IMR-90 (cell line): ENCODE measurements at regions of chr1 and their contacts with region 1.

Region 1: DNA sequence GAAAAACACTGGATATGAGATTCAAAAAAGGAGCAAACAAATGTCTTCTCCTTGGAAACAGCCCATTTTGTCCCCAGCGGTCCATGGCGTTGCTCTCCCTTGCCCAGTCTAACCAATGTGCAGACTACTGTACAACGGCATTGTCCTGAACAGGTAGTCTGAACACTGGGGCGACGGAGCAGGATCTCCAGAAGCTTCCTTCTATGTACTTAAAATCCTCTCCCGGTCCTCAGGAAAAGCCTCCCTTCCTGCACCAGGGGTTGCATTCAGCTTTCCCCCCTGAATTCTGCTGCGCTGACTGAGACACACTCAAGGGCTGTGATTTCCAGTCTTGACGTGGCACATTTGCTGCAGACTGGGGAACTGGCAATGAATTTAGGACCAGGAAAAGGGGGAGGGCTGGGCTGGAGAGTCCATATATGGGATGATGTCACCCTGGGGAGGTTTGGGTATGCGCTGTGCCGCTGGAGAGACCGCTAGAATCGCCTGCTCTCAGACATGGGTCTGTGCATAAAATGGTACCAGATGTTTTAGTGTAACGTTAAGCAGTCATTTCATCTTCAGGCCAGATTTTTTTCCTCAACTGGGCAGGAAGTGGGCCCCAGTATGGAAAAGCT is 275.9 kb upstream of the C1orf105 start:
- DNase-seq: peak; percentile 98
- ATAC-seq: peak; percentile 90
- H3K4me3 ChIP-seq: peak overlapping the region; percentile 65
- H3K27ac ChIP-seq: peak overlapping the region; percentile 86
- H3K4me1 ChIP-seq: peaks cover 5% of the 10 kb centered on the region; the same call in 1 of the 2 replicates
- H3K27me3 ChIP-seq: no peaks in the 10 kb centered on the region
- CTCF ChIP-seq: no peak
- POLR2A ChIP-seq: peak; percentile 87
- RAD21 ChIP-seq: peak; percentile 18; the same call in 1 of the 2 replicates

Region 2: DNA sequence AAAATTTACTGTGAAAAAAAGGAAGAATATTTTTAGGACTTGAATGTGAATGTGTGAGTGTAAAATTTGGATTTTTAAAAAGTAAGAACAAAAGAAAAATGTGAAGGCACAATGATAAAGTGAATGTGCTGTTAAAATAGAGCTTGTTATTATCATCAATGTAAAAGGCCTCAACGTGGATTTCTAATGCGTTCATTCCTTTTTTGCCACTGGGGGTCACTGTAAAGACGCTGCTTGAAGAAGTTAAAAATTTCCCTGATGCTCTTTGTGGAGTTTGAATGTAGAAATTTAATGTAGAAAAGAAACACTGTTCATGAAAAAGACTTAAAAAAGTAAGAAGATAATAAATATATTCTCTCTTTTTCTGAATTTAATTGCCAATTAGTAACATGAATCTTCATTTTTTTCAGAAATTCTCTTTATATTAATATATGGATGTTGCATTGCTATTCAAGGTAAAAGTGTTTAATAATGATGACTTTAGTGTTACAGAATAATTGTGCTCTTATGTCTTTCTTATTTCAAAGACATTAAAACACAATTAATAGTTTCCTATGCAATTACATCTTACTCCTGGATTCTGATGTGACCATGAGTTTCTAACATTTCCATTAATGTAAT is 141.7 kb before region 1 on chr1:
- CTCF ChIA-PET with region 1: no interaction called
- POLR2A ChIA-PET with region 1: interaction called, 7 read pairs
- dilution Hi-C with region 1: no loop called
- in situ Hi-C with region 1: no loop called
- intact Hi-C with region 1: loop called (anchors 2 kb)
- DNase-seq: peak; percentile 73
- ATAC-seq: peak; percentile 69
- H3K4me3 ChIP-seq: no peak overlapping the region
- H3K27ac ChIP-seq: no peak overlapping the region
- H3K4me1 ChIP-seq: peaks cover 3% of the 10 kb centered on the region; the same call in 1 of the 2 replicates
- H3K27me3 ChIP-seq: no peaks in the 10 kb centered on the region
- CTCF ChIP-seq: peak; percentile 92
- POLR2A ChIP-seq: no peak
- RAD21 ChIP-seq: peak; percentile 94

Region 3: DNA sequence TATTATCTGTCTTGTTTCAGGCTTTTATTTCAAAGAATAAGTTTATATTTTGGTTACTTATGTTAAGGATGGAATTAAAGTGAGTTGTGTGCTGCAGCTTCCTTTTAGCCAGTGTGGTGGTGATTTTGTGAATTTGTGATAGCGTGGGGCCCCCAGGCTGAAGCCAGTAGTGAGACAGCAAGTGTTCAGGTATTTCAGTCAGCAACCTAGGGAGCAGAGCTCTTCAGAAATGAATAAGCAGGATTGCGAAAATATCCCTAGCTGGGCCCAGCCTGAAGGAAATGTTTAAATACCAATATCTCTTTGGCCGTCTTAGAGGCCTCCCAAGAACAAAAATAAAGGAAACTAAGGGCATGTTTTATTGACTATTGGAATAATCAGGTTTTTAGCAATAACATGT is 125.1 kb after region 1 on chr1:
- CTCF ChIA-PET with region 1: no interaction called
- POLR2A ChIA-PET with region 1: no interaction called
- dilution Hi-C with region 1: no loop called
- in situ Hi-C with region 1: no loop called
- intact Hi-C with region 1: loop called (anchors 1 kb)
- DNase-seq: peak; percentile 66
- ATAC-seq: peak; percentile 74
- H3K4me3 ChIP-seq: no peak overlapping the region
- H3K27ac ChIP-seq: no peak overlapping the region
- H3K4me1 ChIP-seq: peaks cover 2% of the 10 kb centered on the region; the same call in 1 of the 2 replicates
- H3K27me3 ChIP-seq: no peaks in the 10 kb centered on the region
- CTCF ChIP-seq: no peak
- POLR2A ChIP-seq: no peak
- RAD21 ChIP-seq: no peak

Region 4: GRCh38 chr1:172343240-172344160 is 198.9 kb after region 1 on chr1:
- CTCF ChIA-PET with region 1: interaction called, 3 read pairs
- POLR2A ChIA-PET with region 1: no interaction called
- dilution Hi-C with region 1: no loop called
- in situ Hi-C with region 1: no loop called
- intact Hi-C with region 1: loop called (anchors 1 kb)
- DNase-seq: peak; percentile 91
- ATAC-seq: peak; percentile 88
- H3K4me3 ChIP-seq: peak overlapping the region; percentile 31; the same call in 1 of the 2 replicates
- H3K27ac ChIP-seq: peak overlapping the region; percentile 56; the same call in 1 of the 2 replicates
- H3K4me1 ChIP-seq: peaks cover 9% of the 10 kb centered on the region
- H3K27me3 ChIP-seq: no peaks in the 10 kb centered on the region
- CTCF ChIP-seq: no peak
- POLR2A ChIP-seq: peak; percentile 37; the same call in 1 of the 2 replicates
- RAD21 ChIP-seq: no peak

Region 5: GRCh38 chr1:172398970-172399755 is 254.6 kb after region 1 on chr1:
- CTCF ChIA-PET with region 1: interaction called, 3 read pairs
- POLR2A ChIA-PET with region 1: interaction called, 12 read pairs
- dilution Hi-C with region 1: no loop called
- in situ Hi-C with region 1: loop called (anchors 10 kb)
- intact Hi-C with region 1: loop called (anchors 1 kb)
- DNase-seq: peak; percentile 92
- ATAC-seq: peak; percentile 88
- H3K4me3 ChIP-seq: no peak overlapping the region
- H3K27ac ChIP-seq: peak overlapping the region; percentile 59; the same call in 1 of the 2 replicates
- H3K4me1 ChIP-seq: peaks cover 3% of the 10 kb centered on the region
- H3K27me3 ChIP-seq: no peaks in the 10 kb centered on the region
- CTCF ChIP-seq: peak; percentile 74
- POLR2A ChIP-seq: 0 out of 2 replicates have a peak, but pooled peaks have one; percentile 27
- RAD21 ChIP-seq: peak; percentile 82

Region 6: DNA sequence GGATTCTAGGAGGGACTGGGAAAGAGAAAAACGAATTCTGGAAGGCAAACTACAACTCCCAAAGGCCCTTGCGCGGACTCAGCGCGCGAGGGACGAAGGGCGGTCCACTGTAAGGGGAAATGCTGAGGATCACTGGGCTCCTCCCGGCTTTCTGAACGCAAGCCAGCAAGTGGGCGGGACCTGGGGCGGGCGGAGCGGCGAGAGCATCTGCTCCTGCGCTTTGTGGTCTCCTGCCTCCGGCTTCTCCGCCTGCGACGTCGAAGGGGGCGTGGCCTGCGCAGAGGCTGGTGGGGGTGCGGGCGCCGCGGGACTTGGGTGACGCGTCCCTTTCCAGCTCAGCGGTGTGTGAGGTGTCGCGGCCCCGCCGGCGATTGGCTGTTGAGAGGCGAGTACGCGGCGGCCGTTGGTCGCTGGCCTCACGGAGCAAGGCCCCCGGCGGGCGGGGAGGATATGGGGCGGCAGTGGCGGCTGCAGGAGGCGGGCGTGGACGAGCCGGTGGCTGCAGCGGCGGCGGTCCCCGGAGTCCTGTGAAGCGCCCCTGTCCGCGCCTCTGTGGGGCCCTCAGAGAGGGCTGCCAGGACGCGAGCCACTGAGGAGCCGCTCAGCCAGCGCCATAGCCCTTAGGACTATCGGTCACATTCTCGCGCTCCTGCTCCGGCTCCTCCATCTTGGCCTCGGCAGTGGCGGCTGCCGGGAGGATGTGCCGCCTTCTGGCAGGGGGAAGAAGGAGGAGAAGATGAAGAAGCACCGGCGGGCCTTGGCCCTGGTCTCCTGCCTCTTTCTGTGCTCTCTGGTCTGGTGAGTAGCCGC is 388.4 kb after region 1 on chr1 and contains the start of gene SUCO:
- CTCF ChIA-PET with region 1: no interaction called
- POLR2A ChIA-PET with region 1: no interaction called
- dilution Hi-C with region 1: no loop called
- in situ Hi-C with region 1: no loop called
- intact Hi-C with region 1: loop called (anchors 5 kb)
- DNase-seq: peak; percentile 99
- ATAC-seq: peak; percentile 92
- H3K4me3 ChIP-seq: peak within 1 kb of the TSS; percentile 97
- H3K27ac ChIP-seq: peak within 1 kb of the TSS; percentile 83
- H3K4me1 ChIP-seq: peaks cover 2% of the 10 kb centered on the region; the same call in 1 of the 2 replicates
- H3K27me3 ChIP-seq: no peaks in the 10 kb centered on the region
- CTCF ChIP-seq: no peak
- POLR2A ChIP-seq: peak; percentile 86
- RAD21 ChIP-seq: peak; percentile 1; the same call in 1 of the 2 replicates
- total RNA-seq, gene SUCO: 21.5 and 31.7 TPM in 2 replicates

Region 7: DNA sequence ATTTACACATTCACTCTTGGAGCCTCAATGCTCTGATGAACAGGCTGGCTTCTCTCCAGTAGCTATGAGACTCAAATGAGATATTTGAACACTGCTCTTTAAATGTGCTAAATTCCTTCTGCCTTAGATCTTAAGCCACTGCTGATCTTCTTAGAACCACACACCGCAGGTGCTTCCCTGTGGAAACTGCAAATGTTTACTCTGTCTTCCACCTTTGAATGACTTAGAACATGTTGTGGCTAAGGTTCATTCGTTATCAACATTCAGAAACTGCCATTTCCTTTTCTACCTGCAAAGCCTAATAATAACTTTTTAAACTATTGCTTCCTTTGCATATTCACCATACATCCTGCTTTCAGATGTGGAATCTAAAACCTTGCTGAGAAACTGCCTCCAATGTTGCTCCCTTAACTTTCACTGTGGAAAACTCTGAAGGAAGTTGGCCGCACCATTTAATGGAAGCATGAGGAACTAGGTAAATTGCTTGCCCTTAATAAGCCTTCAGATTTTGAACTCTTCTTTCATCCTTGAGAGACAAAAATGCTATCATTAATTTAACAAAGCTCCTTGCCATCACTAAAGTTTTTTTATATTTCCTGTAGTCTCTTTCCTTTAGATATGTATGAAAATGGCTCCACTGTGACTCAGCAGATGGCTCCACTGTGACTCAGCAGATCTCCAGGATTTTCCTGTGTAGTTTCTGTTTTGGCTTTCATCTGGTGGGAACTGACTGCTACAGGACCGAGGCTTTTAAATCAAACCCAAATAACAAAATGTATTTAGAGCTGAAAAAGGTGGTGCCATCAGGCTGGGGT is 762.4 kb after region 1 on chr1:
- CTCF ChIA-PET with region 1: no interaction called
- POLR2A ChIA-PET with region 1: interaction called, 17 read pairs
- dilution Hi-C with region 1: no loop called
- in situ Hi-C with region 1: no loop called
- intact Hi-C with region 1: no loop called
- DNase-seq: peak; percentile 93
- ATAC-seq: 0 out of 2 replicates have a peak, but pooled peaks have one; percentile 3
- H3K4me3 ChIP-seq: no peak overlapping the region
- H3K27ac ChIP-seq: peak overlapping the region; percentile 67
- H3K4me1 ChIP-seq: peaks cover 23% of the 10 kb centered on the region
- H3K27me3 ChIP-seq: no peaks in the 10 kb centered on the region
- CTCF ChIP-seq: no peak
- POLR2A ChIP-seq: 0 out of 2 replicates have a peak, but pooled peaks have one; percentile 22
- RAD21 ChIP-seq: no peak